ENCODE measurements at regions of chr6 and their contacts with region 1.

Region 1: DNA sequence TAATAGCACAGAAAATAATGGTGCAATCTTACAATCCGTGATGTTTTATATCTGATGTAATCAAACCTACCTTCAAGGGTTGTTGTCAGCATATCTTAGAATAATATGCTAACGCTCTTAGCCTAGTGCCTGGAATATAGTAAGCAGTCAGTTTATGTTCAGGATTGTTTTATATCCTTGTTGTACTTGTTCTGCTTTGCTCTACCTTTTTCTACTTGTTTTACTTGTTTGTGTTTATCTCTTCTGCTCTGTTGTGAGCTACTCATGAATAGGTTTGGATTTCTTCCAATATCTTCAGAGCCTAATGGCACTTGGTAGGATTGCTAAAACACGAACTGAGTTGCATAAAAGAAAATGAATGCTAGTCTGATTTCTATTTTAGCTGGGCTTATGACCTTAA is 40.1 kb downstream of the DNAH8 start:
- DNase-seq: no peak
- ATAC-seq: no peak
- H3K4me3 ChIP-seq: no peak overlapping the region
- H3K4me3 Mint-ChIP-seq: no peak overlapping the region
- H3K27ac ChIP-seq: no peak overlapping the region
- H3K27ac Mint-ChIP-seq: no peak overlapping the region
- H3K4me1 ChIP-seq: no peaks in the 10 kb centered on the region
- H3K4me1 Mint-ChIP-seq: no peaks in the 10 kb centered on the region
- H3K27me3 ChIP-seq: no peaks in the 10 kb centered on the region
- H3K27me3 Mint-ChIP-seq: peaks cover 5 to 14% of the 10 kb centered on the region in 2 donors

Region 2: DNA sequence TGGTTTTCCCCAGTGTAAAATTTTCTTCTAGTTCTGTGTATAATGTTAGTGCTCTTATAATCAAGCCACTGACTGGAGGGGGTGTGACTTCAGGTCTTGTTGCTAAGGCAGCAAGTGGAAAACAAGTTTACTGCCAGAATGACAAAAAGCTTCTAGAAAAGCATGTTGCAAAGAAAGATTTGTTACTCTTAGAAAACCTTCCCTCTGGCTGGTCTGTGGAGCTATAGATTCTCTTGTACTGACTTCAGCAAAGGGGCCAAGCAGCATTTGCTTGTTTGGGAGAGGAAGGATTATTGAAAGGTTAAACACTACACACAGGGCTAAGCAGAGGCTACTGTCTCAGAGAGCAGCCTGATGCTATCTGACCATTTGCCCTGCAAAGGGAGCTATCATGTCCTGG is 404.2 kb before region 1 on chr6:
- CTCF ChIA-PET with region 1: no interaction called
- POLR2A ChIA-PET with region 1: interaction called in 1 of 2 experiments, 13 read pairs
- DNase-seq: no peak
- ATAC-seq: no peak
- H3K4me3 ChIP-seq: no peak overlapping the region
- H3K4me3 Mint-ChIP-seq: no peak overlapping the region
- H3K27ac ChIP-seq: no peak overlapping the region
- H3K27ac Mint-ChIP-seq: no peak overlapping the region
- H3K4me1 ChIP-seq: no peaks in the 10 kb centered on the region
- H3K4me1 Mint-ChIP-seq: peaks cover 1 to 9% (median 6%) of the 10 kb centered on the region in 3 donors
- H3K27me3 ChIP-seq: no peaks in the 10 kb centered on the region
- H3K27me3 Mint-ChIP-seq: no peaks in the 10 kb centered on the region

Region 3: DNA sequence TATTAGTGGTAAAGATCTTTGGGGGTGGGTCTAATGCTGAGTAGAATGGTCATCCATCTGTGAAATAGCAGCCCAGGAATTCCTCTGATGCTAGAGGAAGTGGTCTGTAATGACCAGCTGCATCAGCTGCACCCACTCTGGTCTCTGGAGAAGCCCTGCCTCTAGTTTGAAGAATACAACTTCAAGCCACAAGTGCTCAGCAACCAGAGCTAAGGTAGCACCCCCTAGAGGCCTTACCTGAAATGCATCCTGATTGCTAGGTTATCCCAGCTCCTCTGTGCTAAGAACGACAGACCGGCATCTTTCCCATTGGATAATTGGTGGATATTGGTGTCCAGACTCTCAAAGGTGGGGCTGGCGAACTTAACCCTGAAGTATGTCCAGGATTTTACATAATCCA is 18.2 kb after region 1 on chr6:
- CTCF ChIA-PET with region 1: no interaction called
- POLR2A ChIA-PET with region 1: no interaction called
- DNase-seq: peak in 1 of 35 experiments; percentile 16
- ATAC-seq: no peak
- H3K4me3 ChIP-seq: no peak overlapping the region
- H3K4me3 Mint-ChIP-seq: no peak overlapping the region
- H3K27ac ChIP-seq: no peak overlapping the region
- H3K27ac Mint-ChIP-seq: no peak overlapping the region
- H3K4me1 ChIP-seq: no peaks in the 10 kb centered on the region
- H3K4me1 Mint-ChIP-seq: no peaks in the 10 kb centered on the region
- H3K27me3 ChIP-seq: peaks cover 0 to 8% of the 10 kb centered on the region in 2 experiments
- H3K27me3 Mint-ChIP-seq: peaks cover 13 to 25% of the 10 kb centered on the region in 2 donors

Region 4: DNA sequence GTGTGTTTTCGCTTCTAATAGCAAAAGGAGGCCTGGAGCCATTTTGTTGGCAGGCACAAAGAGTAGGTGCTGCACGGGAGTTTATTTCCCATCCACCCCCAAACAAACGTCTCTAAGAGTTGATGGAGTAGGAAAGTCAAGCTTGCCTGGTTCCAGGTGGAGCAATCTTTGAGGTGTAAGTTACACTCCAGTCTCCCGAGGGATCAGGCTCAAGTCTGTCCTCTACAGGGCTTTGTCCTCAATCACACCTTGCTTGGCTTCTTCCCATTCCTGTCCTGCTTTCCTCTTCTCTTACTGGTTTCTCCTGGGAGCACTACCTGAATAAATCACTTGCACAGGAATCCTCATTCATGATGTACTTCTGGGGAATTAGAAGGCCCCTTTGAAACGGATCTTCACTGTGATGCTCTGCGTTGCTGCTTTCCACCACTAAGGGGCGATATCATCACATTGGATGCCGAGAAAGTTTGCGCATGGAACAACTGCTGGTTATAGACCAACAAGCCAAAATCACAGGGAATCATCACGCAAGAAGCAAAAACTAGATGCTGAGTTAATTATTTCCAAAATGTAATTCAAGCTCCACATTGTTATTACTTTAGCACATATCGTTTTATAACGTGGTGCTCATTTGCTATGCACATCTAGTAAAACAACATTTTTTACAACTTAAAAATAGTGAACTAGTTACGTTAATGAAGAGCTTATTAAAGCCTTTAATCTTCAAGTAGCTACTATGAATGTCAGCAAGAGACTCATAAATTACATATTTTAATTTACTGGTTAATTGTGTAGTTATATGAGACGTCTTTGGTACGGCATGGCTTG is 116.8 kb after region 1 on chr6:
- CTCF ChIA-PET with region 1: no interaction called
- POLR2A ChIA-PET with region 1: no interaction called
- DNase-seq: peak in 34 of 35 experiments; percentile 5 to 75 (median 36)
- ATAC-seq: peak in 1 of 4 experiments; percentile 46
- H3K4me3 ChIP-seq: no peak overlapping the region
- H3K4me3 Mint-ChIP-seq: no peak overlapping the region
- H3K27ac ChIP-seq: no peak overlapping the region
- H3K27ac Mint-ChIP-seq: no peak overlapping the region
- H3K4me1 ChIP-seq: peaks cover 9 to 13% of the 10 kb centered on the region in 2 experiments
- H3K4me1 Mint-ChIP-seq: peaks cover 15 to 37% (median 31%) of the 10 kb centered on the region in 3 donors
- H3K27me3 ChIP-seq: peaks cover 2 to 3% of the 10 kb centered on the region in 2 experiments
- H3K27me3 Mint-ChIP-seq: peaks cover 3 to 12% of the 10 kb centered on the region in 2 donors

Region 5: GRCh38 chr6:38968702-38969149 is 213.5 kb after region 1 on chr6:
- CTCF ChIA-PET with region 1: no interaction called
- POLR2A ChIA-PET with region 1: no interaction called
- DNase-seq: no peak
- ATAC-seq: no peak
- H3K4me3 ChIP-seq: no peak overlapping the region
- H3K4me3 Mint-ChIP-seq: no peak overlapping the region
- H3K27ac ChIP-seq: no peak overlapping the region
- H3K27ac Mint-ChIP-seq: no peak overlapping the region
- H3K4me1 ChIP-seq: no peaks in the 10 kb centered on the region
- H3K4me1 Mint-ChIP-seq: no peaks in the 10 kb centered on the region
- H3K27me3 ChIP-seq: no peaks in the 10 kb centered on the region
- H3K27me3 Mint-ChIP-seq: peaks cover 0 to 4% of the 10 kb centered on the region in 2 donors

Measured in T-cell (primary cell).